PC-3 (cell line): ENCODE measurements at regions of chr12 and their contacts with region 1.

Region 1: DNA sequence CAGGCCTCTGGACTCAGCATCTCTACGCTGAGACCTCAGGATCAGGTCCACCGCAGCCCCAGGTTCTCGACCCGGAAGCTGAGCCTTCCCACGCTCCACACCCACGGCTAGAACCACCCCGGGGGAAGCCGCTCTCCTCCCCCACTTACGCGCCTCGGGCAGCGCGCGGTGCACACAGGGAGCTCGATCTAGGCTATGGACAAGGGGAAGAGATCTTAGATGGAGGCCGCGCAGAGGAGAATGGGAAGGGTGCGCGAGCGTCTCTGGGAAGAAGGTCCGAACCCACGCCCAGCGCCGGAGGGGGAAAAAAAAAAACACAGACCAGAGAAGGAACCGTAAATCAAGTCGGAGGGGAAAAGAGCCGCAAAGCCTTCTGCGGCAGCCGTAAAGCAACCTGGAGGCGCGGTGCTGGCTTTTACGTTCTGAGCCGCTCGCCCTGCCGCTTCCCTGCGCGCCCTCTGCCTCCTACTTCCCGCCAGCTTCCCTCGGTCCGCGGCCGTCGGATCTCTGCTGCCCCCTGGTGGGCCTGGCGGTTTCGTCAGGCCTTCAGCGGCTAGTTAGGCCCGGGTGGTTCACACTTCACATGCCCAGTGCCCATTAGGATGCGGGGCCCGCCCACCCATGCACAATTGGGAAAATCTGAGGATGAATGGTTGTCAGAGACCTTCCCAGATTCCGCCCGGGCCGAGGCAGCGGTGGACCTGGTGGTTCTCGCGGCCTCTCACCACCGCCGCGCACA is at the start of gene RAD52:
- DNase-seq: peak; percentile 97
- ATAC-seq: peak; percentile 87
- H3K4me3 ChIP-seq: peak within 1 kb of the TSS; percentile 84
- H3K27ac ChIP-seq: peak within 1 kb of the TSS; percentile 94
- H3K4me1 ChIP-seq: peaks cover 18% of the 10 kb centered on the region
- H3K27me3 ChIP-seq: no peaks in the 10 kb centered on the region
- CTCF ChIP-seq: peak; percentile 84
- total RNA-seq, gene RAD52: 17.4 and 19.3 TPM in 2 replicates

Region 2: DNA sequence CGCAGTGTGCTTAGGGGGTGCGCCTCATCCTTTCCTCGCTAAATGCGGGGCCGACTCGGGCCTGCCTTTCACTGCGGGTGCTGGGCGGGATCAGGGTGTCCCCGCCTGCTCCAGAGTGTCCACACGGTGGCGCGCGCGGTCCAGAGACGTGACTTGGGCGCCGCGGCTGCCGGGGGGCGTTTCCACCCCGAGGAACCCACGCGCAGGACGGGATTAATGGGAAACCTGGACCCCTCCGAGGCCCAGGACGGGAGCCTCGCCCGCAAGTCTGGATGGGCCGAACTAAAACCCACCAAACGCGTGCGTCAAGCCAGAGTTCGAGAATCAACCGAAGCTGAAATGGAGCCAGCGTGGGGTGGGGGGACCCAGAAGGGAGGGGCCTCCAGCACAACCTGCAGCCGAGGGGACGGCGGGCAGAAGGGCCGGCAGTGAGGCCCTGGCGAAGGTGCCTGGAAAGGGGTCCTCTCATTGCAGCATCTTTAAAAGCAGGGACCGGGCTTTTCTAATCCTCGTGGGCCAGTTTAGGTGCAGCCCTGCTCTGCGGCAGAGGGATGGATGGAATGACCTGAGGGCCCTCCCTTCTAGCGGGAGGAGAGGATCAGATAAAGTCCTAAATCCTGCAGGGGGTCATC is 379.7 kb before region 1 on chr12:
- CTCF ChIA-PET with region 1: no interaction called
- POLR2A ChIA-PET with region 1: no interaction called
- intact Hi-C with region 1: loop called (anchors 1 kb)
- DNase-seq: peak; percentile 80
- ATAC-seq: peak; percentile 55
- H3K4me3 ChIP-seq: peak overlapping the region; percentile 87
- H3K27ac ChIP-seq: peak overlapping the region; percentile 90
- H3K4me1 ChIP-seq: peaks cover 24% of the 10 kb centered on the region
- H3K27me3 ChIP-seq: no peaks in the 10 kb centered on the region
- CTCF ChIP-seq: peak; percentile 87

Region 3: GRCh38 chr12:810671-811415 is 138.8 kb before region 1 on chr12:
- CTCF ChIA-PET with region 1: interaction called, 5 read pairs
- POLR2A ChIA-PET with region 1: no interaction called
- intact Hi-C with region 1: loop called (anchors 1 kb)
- DNase-seq: no peak
- ATAC-seq: no peak
- H3K4me3 ChIP-seq: no peak overlapping the region
- H3K27ac ChIP-seq: no peak overlapping the region
- H3K4me1 ChIP-seq: no peaks in the 10 kb centered on the region
- H3K27me3 ChIP-seq: no peaks in the 10 kb centered on the region
- CTCF ChIP-seq: no peak

Region 4: DNA sequence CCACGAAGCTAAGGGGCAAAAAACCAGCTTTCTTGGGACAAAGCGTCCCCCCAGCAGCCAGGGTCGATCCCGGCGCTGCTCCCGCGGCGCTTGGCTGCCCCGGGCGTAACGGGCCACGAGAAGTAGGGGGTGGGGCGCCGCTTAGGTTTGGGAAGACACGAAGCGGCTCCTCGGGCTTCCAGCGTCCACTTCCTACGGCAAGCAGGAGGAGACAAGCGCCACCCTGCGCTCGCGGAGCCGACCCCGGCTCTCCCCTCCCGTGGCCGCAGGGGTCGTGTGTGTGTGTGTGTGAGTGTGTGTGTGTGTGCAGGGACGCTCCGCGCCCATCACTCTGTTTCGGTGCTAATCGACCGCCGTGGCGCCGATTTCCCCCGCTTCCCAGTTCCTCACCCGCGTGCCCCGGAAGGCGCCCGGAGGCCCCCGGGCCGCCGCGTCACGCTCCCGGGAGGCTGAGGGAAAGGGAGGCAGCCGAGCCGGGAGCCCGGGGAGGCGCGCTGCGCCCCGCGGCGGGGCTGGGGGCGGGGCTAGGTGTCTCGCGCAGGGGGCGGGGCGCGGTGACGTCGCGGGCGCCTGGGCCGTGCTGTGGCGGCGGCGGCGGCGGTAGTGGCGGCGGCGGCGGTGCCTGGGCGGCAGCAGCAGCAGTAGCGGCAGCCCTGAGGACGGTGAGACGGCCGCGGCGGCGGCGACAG is 41.2 kb after region 1 on chr12 and contains the start of gene ERC1:
- CTCF ChIA-PET with region 1: interaction called, 5 read pairs
- POLR2A ChIA-PET with region 1: no interaction called
- intact Hi-C with region 1: loop called (anchors 5 kb)
- DNase-seq: peak; percentile 73
- ATAC-seq: peak; percentile 85
- H3K4me3 ChIP-seq: peak within 1 kb of the TSS; percentile 69
- H3K27ac ChIP-seq: peak within 1 kb of the TSS; percentile 79
- H3K4me1 ChIP-seq: peaks cover 41% of the 10 kb centered on the region
- H3K27me3 ChIP-seq: no peaks in the 10 kb centered on the region
- CTCF ChIP-seq: no peak
- total RNA-seq, gene ERC1: 12.3 and 16.0 TPM in 2 replicates

Region 5: DNA sequence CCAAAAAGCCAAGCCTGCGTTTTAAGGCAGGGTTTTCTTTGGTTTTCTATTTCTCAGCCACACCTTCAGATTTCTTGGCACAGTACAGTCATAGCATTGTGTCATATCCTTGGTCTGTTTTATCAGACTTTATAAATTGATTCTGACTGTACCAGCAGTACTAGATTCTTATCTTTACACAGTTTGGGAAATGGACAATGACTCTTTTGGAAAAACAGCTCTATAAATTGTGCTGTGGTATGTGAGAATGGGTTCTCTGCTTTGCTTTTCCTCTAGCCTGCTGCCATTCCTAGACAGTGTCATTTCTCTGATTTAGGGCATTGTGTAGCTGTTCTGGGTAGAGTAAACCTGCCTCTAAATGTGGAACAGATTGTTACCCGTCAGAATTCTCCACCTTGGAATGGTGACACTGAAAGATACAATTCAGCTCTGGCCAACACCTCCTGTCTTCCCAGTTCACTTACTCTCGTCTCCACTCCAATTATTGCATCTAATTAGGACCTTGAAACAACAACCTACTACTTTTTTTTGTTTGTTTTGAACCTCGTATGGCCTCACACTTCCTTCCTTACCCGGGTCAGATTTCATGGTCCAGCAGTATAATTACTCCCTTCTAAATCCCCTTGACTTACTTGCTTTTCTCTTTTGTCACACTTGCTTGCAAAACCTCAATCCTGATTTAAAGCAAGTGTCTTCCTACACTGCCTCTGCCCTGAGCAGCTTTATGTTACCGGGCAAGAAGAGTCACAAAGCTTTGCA is 267.7 kb after region 1 on chr12:
- CTCF ChIA-PET with region 1: no interaction called
- POLR2A ChIA-PET with region 1: no interaction called
- intact Hi-C with region 1: no loop called
- DNase-seq: peak; percentile 94
- ATAC-seq: peak; percentile 84
- H3K4me3 ChIP-seq: peak overlapping the region; percentile 54
- H3K27ac ChIP-seq: peak overlapping the region; percentile 99
- H3K4me1 ChIP-seq: peaks cover 58% of the 10 kb centered on the region
- H3K27me3 ChIP-seq: no peaks in the 10 kb centered on the region
- CTCF ChIP-seq: no peak